Posterior vena cava (tissue), 2 donors: ENCODE measurements at regions of chr12 and their contacts with region 1.

Region 1: DNA sequence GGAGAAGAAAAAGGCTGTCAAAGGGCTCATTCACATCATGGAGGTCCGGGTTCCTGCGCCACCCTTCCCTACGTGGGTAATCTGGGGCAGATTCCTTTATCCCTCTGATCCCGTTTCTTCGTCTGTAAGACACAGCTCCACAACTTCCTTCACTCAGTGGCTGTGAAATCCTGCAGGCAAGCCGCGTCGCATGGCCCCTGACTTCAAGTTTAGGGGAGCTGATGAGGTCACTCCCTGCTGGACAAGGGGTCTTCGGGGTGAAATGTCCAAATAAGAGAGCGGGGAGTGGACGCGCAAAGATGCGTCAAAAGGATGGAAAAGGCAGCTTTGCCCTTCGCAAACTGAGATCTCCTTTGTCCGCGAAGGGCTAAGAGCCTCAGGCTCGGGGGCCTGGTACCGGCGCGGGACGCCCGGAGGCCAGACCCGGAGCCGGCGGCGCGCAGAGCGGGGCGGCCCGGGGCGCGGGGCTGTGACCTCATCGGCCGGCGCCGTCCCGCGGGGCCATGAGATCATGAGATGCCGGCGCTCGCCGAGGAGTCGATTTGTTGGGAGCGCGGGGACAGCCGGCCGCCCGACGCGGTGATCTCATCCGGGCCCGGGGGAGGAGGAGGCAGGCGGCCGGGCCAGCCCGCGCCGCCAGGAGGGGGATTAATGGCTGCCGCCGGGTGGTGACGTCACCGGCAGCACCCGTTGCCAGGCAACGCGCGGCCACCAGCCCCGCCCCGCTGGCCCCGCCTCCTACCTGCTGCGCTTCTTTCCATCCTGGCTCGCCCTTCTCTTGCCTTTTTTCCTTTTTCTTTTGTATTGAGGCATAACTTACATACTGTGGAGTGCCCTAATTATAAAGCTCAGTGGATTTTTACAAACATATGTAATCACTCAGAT is 62.1 kb downstream of the HRK start:
- DNase-seq: peak; percentile 97

Region 2: GRCh38 chr12:116771651-116772050 is 47.5 kb before region 1 on chr12:
- intact Hi-C with region 1: loop called in 1 of 2 experiments (anchors 1 kb)
- DNase-seq: no peak